PC-3 (cell line): ENCODE measurements at regions of chr5 and their contacts with region 1.

Region 1: DNA sequence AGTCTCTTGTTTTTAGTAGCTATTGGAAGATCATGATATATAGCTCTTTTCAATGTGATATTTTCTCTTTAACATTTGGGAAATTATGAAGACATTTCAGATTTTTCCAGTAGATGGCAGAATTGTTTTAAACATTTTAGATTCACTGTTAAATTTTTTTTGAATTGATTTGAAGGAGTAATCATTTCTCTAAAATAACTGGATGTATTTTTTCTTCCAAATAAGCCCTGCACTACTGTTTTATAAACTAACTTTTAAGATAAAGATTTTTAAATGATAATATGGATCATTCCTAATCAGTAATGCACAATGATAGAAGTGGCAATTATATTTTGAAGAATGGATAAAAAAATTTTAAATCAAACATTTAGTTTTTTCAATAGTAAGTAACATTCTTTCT is 14.2 kb downstream of the NDUFAF2 start:
- DNase-seq: peak; percentile 51
- ATAC-seq: no peak
- H3K4me3 ChIP-seq: no peak overlapping the region
- H3K27ac ChIP-seq: no peak overlapping the region
- H3K4me1 ChIP-seq: no peaks in the 10 kb centered on the region
- H3K27me3 ChIP-seq: no peaks in the 10 kb centered on the region
- CTCF ChIP-seq: peak; percentile 52; the same call in 1 of the 2 replicates

Region 2: GRCh38 chr5:61048534-61048933 is 89.4 kb after region 1 on chr5:
- CTCF ChIA-PET with region 1: interaction called, 3 read pairs
- POLR2A ChIA-PET with region 1: no interaction called
- intact Hi-C with region 1: loop called (anchors 2 kb)
- DNase-seq: peak; percentile 83
- ATAC-seq: peak; percentile 68
- H3K4me3 ChIP-seq: no peak overlapping the region
- H3K27ac ChIP-seq: peak overlapping the region; percentile 57
- H3K4me1 ChIP-seq: peaks cover 45% of the 10 kb centered on the region
- H3K27me3 ChIP-seq: no peaks in the 10 kb centered on the region
- CTCF ChIP-seq: no peak

Region 3: GRCh38 chr5:61139100-61139873 is 180.1 kb after region 1 on chr5:
- CTCF ChIA-PET with region 1: interaction called, 6 read pairs
- POLR2A ChIA-PET with region 1: no interaction called
- intact Hi-C with region 1: loop called (anchors 5 kb)
- DNase-seq: peak; percentile 26
- ATAC-seq: peak; percentile 76
- H3K4me3 ChIP-seq: no peak overlapping the region
- H3K27ac ChIP-seq: no peak overlapping the region
- H3K4me1 ChIP-seq: no peaks in the 10 kb centered on the region
- H3K27me3 ChIP-seq: no peaks in the 10 kb centered on the region
- CTCF ChIP-seq: peak; percentile 58

Region 4: GRCh38 chr5:61301341-61302199 is 342.4 kb after region 1 on chr5:
- CTCF ChIA-PET with region 1: interaction called, 3 read pairs
- POLR2A ChIA-PET with region 1: interaction called, 15 read pairs
- intact Hi-C with region 1: no loop called
- DNase-seq: peak; percentile 94
- ATAC-seq: peak; percentile 86
- H3K4me3 ChIP-seq: peak overlapping the region; percentile 63
- H3K27ac ChIP-seq: peak overlapping the region; percentile 97
- H3K4me1 ChIP-seq: peaks cover 74% of the 10 kb centered on the region
- H3K27me3 ChIP-seq: no peaks in the 10 kb centered on the region
- CTCF ChIP-seq: no peak

Region 5: DNA sequence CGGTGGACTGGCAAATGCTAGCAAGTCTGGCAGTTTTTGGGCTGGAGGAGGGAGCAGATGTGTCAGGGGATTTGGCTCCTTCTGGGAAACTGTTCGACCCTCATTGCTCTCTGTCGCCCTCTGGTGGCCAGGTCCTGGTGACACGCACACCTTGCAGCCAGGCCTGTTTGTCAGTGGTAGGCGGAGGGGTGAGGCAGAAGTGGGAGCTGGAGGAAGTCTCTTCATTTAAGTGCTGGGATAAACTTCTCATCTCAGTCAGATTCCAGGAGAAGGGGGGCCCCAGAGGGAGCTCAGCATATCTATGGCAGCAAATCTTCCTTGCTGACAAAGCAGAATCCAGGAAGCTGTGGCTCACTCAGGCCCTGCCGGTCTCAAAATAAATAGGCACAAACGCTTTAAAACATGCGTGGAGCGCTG is 699.4 kb after region 1 on chr5:
- CTCF ChIA-PET with region 1: no interaction called
- POLR2A ChIA-PET with region 1: no interaction called
- intact Hi-C with region 1: loop called (anchors 5 kb)
- DNase-seq: peak; percentile 76
- ATAC-seq: peak; percentile 81
- H3K4me3 ChIP-seq: no peak overlapping the region
- H3K27ac ChIP-seq: no peak overlapping the region
- H3K4me1 ChIP-seq: no peaks in the 10 kb centered on the region
- H3K27me3 ChIP-seq: no peaks in the 10 kb centered on the region
- CTCF ChIP-seq: peak; percentile 81

Region 6: DNA sequence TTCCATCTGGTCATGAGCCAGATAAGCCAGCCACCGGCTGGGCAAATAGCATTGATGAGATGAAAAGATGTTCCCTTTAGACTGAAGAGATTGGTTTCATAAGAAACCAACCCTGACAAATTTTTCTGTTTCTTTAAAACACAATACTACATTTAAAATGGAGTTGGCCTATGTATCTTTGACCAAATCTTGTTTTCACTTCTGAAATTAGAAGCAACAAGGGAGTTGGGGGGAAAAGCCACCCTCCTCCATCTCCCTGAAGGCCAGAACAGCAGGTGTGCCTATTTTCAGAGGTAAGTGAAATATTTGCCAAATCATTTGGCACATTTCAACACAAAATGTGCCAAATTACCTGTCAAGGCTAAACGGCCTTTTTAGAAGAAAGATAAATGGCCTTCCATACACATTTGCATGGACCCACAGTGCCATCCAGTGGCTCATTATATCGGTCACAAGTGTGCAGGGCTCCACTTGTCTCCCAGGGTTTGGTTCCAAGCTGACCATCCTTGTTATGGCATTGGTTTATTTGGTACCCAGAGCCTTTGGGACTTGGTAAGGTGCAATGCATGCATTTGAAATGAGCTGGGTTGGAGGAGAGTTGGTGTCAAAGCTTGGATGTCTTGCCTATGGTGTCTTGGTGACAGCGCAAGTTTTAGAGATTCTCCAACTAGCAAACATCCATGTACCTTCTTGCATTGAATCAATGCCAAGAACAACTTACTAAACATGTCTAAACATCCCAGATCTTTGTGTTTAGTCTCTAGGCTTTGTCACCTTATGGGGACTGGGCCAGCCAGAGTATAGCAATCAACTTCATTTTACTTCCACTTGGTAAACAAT is 974.9 kb after region 1 on chr5:
- CTCF ChIA-PET with region 1: no interaction called
- POLR2A ChIA-PET with region 1: no interaction called
- intact Hi-C with region 1: loop called (anchors 2 kb)
- DNase-seq: peak; percentile 68
- ATAC-seq: peak; percentile 54
- H3K4me3 ChIP-seq: no peak overlapping the region
- H3K27ac ChIP-seq: no peak overlapping the region
- H3K4me1 ChIP-seq: no peaks in the 10 kb centered on the region
- H3K27me3 ChIP-seq: no peaks in the 10 kb centered on the region
- CTCF ChIP-seq: peak; percentile 71